ENCODE measurements at regions of chr20 and their contacts with region 1.

Region 1: GRCh38 chr20:21719592-21720214 is 14.2 kb downstream of the PAX1 start:
- DNase-seq: peak; percentile 65
- H3K4me3 ChIP-seq: peak overlapping the region in 1 of 2 experiments; percentile 23; a peak in 1 of 4 replicates
- H3K27ac ChIP-seq: no peak overlapping the region
- H3K4me1 ChIP-seq: no peaks in the 10 kb centered on the region
- H3K27me3 ChIP-seq: peaks cover 29% of the 10 kb centered on the region
- CTCF ChIP-seq: peak; percentile 92
- EP300 ChIP-seq: no peak
- RAD21 ChIP-seq: peak; percentile 30

Region 2: DNA sequence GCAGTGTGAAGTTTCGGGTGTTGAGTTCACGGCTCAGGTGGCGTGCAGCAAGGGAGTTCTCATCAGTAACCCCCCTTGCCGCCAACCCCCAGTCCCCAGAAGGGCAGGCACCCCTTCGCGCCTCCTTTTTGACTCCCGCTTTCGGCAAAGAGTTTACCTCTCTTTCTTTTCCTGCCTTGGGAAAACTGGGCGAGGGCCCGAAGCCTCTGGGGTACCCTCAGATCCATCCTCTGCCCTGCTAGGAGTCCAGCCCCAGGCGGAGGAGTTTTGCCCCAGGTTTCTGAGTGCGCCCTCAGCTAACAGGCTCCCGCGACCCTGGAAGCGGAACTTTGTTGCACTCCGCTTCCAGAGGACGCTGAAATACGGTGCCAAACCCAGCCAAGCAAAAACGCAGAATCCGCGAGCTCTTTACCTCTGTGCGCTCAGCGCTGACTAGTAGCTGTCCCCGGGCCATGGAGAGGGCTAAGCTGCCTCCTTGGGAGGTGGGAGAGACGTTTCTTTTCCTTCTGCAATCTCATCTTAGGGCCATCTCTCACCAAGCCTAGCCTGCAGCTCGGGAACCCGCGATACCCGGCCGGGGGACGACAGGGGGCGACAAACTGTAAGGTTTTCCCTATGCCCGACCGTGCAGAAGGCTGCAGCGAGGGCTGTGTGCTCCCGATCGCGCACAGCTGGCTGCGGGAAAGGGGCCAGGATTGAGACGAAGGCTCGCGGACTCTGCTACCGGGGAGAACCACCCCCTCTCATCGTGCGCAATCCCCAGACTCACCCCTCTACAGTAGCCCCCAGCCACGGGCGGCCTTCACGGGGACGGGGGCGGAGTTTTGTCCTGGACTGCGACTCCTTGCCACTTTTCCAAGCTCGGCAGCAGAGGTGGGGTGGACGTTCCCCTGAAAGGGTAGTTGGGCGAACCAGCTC is 16.9 kb before region 1 on chr20:
- CTCF ChIA-PET with region 1: interaction called, 40 read pairs
- POLR2A ChIA-PET with region 1: no interaction called
- DNase-seq: peak; percentile 80
- H3K4me3 ChIP-seq: peak overlapping the region; percentile 21 to 54; a peak in 3 of 4 replicates
- H3K27ac ChIP-seq: no peak overlapping the region
- H3K4me1 ChIP-seq: no peaks in the 10 kb centered on the region; a peak in 1 of 4 replicates
- H3K27me3 ChIP-seq: peaks cover 78% of the 10 kb centered on the region
- CTCF ChIP-seq: peak; percentile 69
- EP300 ChIP-seq: no peak
- RAD21 ChIP-seq: peak; percentile 46

Region 3: GRCh38 chr20:21708738-21709534 is 10.8 kb before region 1 on chr20:
- CTCF ChIA-PET with region 1: interaction called, 40 read pairs
- POLR2A ChIA-PET with region 1: no interaction called
- DNase-seq: no peak
- H3K4me3 ChIP-seq: no peak overlapping the region
- H3K27ac ChIP-seq: no peak overlapping the region
- H3K4me1 ChIP-seq: no peaks in the 10 kb centered on the region
- H3K27me3 ChIP-seq: peaks cover 89% of the 10 kb centered on the region
- CTCF ChIP-seq: no peak
- EP300 ChIP-seq: no peak
- RAD21 ChIP-seq: no peak

Region 4: GRCh38 chr20:21739682-21740081 is 20.0 kb after region 1 on chr20:
- CTCF ChIA-PET with region 1: interaction called, 18 read pairs
- POLR2A ChIA-PET with region 1: no interaction called
- DNase-seq: no peak
- H3K4me3 ChIP-seq: no peak overlapping the region
- H3K27ac ChIP-seq: no peak overlapping the region
- H3K4me1 ChIP-seq: no peaks in the 10 kb centered on the region
- H3K27me3 ChIP-seq: no peaks in the 10 kb centered on the region
- CTCF ChIP-seq: no peak
- EP300 ChIP-seq: no peak
- RAD21 ChIP-seq: no peak